ENCODE measurements at regions of chr2 and their contacts with region 1.

Region 1: DNA sequence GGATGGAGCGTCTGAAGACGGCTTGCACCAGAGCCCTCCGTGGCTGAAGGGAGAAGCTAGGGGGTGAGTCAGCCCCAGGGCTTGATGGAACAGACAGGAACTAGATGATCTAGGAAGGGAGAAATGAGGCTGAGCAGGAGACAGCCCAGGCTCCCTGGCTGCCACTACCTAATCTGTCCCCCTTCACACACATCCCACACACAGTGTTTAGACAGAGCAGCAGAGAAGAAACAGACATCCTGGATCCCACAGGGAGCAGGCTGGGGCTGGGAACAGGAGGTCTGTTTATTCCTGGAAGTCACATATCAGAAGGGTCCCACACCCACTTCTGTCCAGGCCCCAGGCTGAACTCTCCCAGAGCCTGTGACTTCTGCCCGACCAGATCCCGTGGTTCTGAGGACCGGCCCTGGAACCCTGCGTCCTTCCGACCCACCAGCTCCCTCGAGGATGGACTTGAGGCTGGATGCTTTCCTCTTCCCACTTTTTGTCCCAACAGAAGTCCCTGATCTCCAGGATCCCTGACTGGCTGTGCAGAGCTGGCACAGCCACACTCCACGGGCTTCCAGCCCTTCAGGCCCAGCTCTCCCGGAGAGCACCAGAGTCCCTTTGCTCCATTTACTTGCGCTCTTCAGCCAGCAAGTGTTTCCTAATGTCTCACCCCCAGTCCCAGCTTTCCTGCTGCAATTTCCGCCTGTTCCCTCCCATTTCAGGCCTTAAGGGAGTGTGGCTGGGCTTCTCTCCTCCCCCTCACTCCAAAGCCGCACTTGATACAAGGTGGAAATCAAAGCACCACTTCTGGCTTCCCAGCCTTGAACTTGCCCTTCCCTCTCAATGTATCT is 1.5 kb upstream of the GPBAR1 start:
- DNase-seq: peak; percentile 96
- H3K4me3 ChIP-seq: no peak overlapping the region
- H3K27ac ChIP-seq: peak overlapping the region; percentile 80 to 89 (median 83)
- H3K4me1 ChIP-seq: peaks cover 0 to 68% (median 59%) of the 10 kb centered on the region in 4 donors
- H3K27me3 ChIP-seq: no peaks in the 10 kb centered on the region
- CTCF ChIP-seq: no peak
- EP300 ChIP-seq: peak; percentile 46 to 89 (median 84)
- POLR2A ChIP-seq: no peak

Region 2: GRCh38 chr2:218066926-218067515 is 192.3 kb before region 1 on chr2:
- intact Hi-C with region 1: no loop called
- DNase-seq: no peak
- H3K4me3 ChIP-seq: no peak overlapping the region
- H3K27ac ChIP-seq: no peak overlapping the region
- H3K4me1 ChIP-seq: peaks cover 0 to 9% (median 5%) of the 10 kb centered on the region in 4 donors
- H3K27me3 ChIP-seq: peaks cover 0 to 36% (median 16%) of the 10 kb centered on the region in 3 donors
- CTCF ChIP-seq: no peak
- EP300 ChIP-seq: no peak
- POLR2A ChIP-seq: no peak

Region 3: GRCh38 chr2:218186355-218186766 is 73.0 kb before region 1 on chr2:
- intact Hi-C with region 1: loop called (anchors 2 kb)
- DNase-seq: peak; percentile 76
- H3K4me3 ChIP-seq: no peak overlapping the region
- H3K27ac ChIP-seq: peak overlapping the region in 3 of 4 donors; percentile 66 to 81 (median 79)
- H3K4me1 ChIP-seq: peaks cover 0 to 29% (median 23%) of the 10 kb centered on the region in 4 donors
- H3K27me3 ChIP-seq: no peaks in the 10 kb centered on the region
- CTCF ChIP-seq: peak; percentile 47 to 85 (median 84)
- EP300 ChIP-seq: no peak
- POLR2A ChIP-seq: no peak

Region 4: DNA sequence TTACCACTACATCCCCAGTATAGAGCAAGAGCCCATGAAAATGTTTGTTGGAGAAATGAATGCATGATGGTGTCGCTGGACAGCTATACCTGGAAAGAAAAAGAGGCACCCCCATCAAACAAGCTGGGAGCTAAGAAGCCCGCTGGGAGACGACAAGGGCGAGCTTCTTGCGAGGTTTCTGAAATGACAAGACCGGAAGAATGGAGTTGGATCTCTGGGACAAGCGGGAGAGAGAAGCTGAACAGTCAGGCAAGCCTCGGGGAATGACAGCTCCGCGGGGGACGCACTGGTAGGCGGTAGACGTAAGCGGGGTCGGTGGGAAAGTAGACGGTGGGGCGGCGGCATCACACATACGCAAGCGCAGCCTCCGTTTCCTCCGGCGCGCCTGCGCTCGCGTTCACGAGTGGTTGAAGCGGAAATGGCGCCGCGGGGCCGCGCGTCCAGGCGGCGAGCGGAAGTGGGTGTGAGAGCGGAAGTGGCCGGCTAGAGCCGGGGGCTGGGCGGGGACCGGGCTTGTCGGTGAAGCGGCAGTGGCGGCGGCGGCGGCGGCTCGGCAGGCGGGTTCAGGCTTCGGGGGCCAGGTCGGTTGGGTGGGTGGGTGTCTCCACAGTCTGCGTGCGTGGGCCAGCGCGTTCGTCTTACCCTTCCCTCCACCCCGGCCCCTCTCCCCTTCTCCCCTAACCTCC is 42.5 kb before region 1 on chr2 and contains the start of gene ARPC2:
- intact Hi-C with region 1: loop called (anchors 2 kb)
- DNase-seq: peak; percentile 97
- H3K4me3 ChIP-seq: peak within 1 kb of the TSS; percentile 67 to 99 (median 86)
- H3K27ac ChIP-seq: peak within 1 kb of the TSS; percentile 91 to 97 (median 94)
- H3K4me1 ChIP-seq: peaks cover 0 to 47% (median 41%) of the 10 kb centered on the region in 4 donors
- H3K27me3 ChIP-seq: no peaks in the 10 kb centered on the region
- CTCF ChIP-seq: peak in 3 of 4 experiments; percentile 23 to 54 (median 43)
- EP300 ChIP-seq: peak in 1 of 4 donors; percentile 30
- POLR2A ChIP-seq: peak; percentile 88 to 92
- total RNA-seq, gene ARPC2: 235 to 267 (median 258) TPM

Region 5: GRCh38 chr2:219269362-219270054 is 1010.2 kb after region 1 on chr2:
- intact Hi-C with region 1: no loop called
- DNase-seq: no peak
- H3K4me3 ChIP-seq: no peak overlapping the region
- H3K27ac ChIP-seq: no peak overlapping the region
- H3K4me1 ChIP-seq: peaks cover 0 to 8% (median 6%) of the 10 kb centered on the region in 4 donors
- H3K27me3 ChIP-seq: no peaks in the 10 kb centered on the region
- CTCF ChIP-seq: no peak
- EP300 ChIP-seq: no peak
- POLR2A ChIP-seq: no peak